Breast epithelium (tissue), 4 donors: ENCODE measurements at regions of chr20 and their contacts with region 1.

Region 1: GRCh38 chr20:17036541-17036940 is 190.3 kb upstream of the PCSK2 start:
- DNase-seq: no peak
- H3K4me3 ChIP-seq: no peak overlapping the region
- H3K27ac ChIP-seq: no peak overlapping the region
- H3K4me1 ChIP-seq: no peaks in the 10 kb centered on the region
- H3K27me3 ChIP-seq: no peaks in the 10 kb centered on the region
- CTCF ChIP-seq: no peak
- POLR2A ChIP-seq: no peak

Region 2: GRCh38 chr20:17014217-17014616 is 22.3 kb before region 1 on chr20:
- intact Hi-C with region 1: no loop called
- DNase-seq: no peak
- H3K4me3 ChIP-seq: no peak overlapping the region
- H3K27ac ChIP-seq: no peak overlapping the region
- H3K4me1 ChIP-seq: no peaks in the 10 kb centered on the region
- H3K27me3 ChIP-seq: peaks cover 0 to 6% of the 10 kb centered on the region in 2 donors
- CTCF ChIP-seq: no peak
- POLR2A ChIP-seq: no peak

Region 3: DNA sequence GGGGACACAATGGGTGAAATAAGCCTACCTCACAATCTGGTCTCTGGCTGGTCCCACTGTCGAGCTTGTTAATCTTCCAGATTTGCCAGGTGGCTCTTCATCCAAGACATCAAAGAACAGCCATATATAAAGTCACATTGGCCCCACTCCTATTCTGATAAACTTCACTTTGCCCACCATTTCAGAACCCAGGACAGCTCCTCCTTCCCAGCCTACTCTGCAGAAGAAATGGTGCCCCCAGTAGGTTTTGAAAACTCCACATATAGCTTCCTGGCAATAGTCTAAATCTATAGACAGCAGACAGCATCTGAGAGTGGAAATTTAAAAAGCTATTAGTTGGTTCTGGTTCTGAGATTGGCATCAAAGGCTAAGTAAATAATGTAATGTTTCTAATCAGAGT is 47.2 kb after region 1 on chr20:
- intact Hi-C with region 1: loop called (anchors 1 kb)
- DNase-seq: no peak
- H3K4me3 ChIP-seq: no peak overlapping the region
- H3K27ac ChIP-seq: no peak overlapping the region
- H3K4me1 ChIP-seq: no peaks in the 10 kb centered on the region
- H3K27me3 ChIP-seq: no peaks in the 10 kb centered on the region
- CTCF ChIP-seq: no peak
- POLR2A ChIP-seq: no peak

Region 4: DNA sequence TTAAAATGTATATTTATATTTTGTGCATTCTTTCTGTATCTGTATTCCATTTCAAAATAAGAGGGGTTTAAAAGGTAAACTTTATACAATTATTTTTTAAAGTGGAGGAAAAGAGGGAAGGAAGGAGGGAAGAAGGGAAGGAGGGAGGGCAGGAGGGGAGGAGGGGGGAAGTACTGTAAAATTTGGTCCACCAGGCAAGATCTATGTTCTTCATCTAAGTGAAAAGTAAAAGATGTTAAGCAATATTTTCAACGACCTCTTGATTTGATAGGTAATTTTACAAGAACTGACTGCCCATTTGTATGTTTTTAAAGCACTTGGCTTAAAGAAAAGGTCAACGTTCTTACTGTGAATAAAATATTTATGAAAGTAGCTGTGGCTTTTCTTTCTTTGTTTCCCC is 160.5 kb after region 1 on chr20:
- intact Hi-C with region 1: loop called (anchors 5 kb)
- DNase-seq: no peak
- H3K4me3 ChIP-seq: no peak overlapping the region
- H3K27ac ChIP-seq: no peak overlapping the region
- H3K4me1 ChIP-seq: no peaks in the 10 kb centered on the region
- H3K27me3 ChIP-seq: peaks cover 0 to 17% of the 10 kb centered on the region in 2 donors
- CTCF ChIP-seq: no peak
- POLR2A ChIP-seq: no peak